HEK293 (cell line): ENCODE measurements at regions of chr11 and their contacts with region 1.

Region 1: GRCh38 chr11:67468835-67469811 is at the start of gene TMEM134:
- H3K4me3 ChIP-seq: peak within 1 kb of the TSS; percentile 71
- H3K27ac ChIP-seq: peak within 1 kb of the TSS; percentile 47; the same call in 1 of the 2 replicates
- H3K4me1 ChIP-seq: no peaks in the 10 kb centered on the region; the same call in 1 of the 2 replicates
- CTCF ChIP-seq: peak; percentile 64

Region 2: GRCh38 chr11:67391304-67392132 is 77.6 kb before region 1 on chr11 and contains the start of gene RAD9A:
- CTCF ChIA-PET with region 1: interaction called, 10 read pairs
- POLR2A ChIA-PET with region 1: interaction called, 3 read pairs
- H3K4me3 ChIP-seq: peak within 1 kb of the TSS; percentile 76
- H3K27ac ChIP-seq: peak within 1 kb of the TSS; percentile 67
- H3K4me1 ChIP-seq: 0 out of 2 replicates have a peak, but pooled peaks cover 3% of the 10 kb centered on the region
- CTCF ChIP-seq: no peak; the same call in 1 of the 2 replicates

Region 3: DNA sequence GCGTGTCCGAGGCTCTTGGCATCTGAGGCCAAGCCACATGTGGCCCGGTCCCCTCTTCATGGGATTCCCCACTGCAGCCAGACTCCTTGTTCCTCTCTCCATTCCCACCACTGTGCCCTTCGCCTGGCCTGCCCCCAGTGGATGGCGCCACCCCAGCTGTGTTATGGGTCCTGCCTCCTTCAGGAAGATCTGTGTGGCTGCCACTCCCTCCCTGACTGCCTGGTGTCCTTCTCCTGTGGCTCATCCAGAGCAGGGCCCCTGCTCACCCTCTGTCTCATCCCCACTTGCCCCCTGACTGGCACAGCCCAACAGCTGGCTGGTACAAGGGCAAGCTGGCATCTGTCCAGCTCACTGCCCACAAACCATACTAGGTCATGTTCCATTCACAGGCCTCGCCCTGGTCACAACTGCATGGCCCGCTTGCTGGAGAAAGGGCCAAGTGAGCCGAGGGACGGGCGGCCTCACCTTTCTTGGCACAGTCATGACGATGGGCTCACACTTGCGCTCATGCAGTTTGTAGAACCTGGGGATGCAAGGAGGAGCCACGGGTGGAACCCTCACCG is 29.7 kb before region 1 on chr11:
- CTCF ChIA-PET with region 1: no interaction called
- POLR2A ChIA-PET with region 1: interaction called, 11 read pairs
- H3K4me3 ChIP-seq: no peak overlapping the region
- H3K27ac ChIP-seq: no peak overlapping the region
- H3K4me1 ChIP-seq: no peaks in the 10 kb centered on the region
- CTCF ChIP-seq: peak; percentile 42; the same call in 1 of the 2 replicates

Region 4: GRCh38 chr11:67482825-67483798 is 14.0 kb after region 1 on chr11 and contains the start of gene AIP:
- CTCF ChIA-PET with region 1: interaction called, 6 read pairs
- POLR2A ChIA-PET with region 1: interaction called, 11 read pairs
- H3K4me3 ChIP-seq: peak within 1 kb of the TSS; percentile 77
- H3K27ac ChIP-seq: peak within 1 kb of the TSS; percentile 45; the same call in 1 of the 2 replicates
- H3K4me1 ChIP-seq: no peaks in the 10 kb centered on the region
- CTCF ChIP-seq: peak; percentile 38; the same call in 1 of the 2 replicates